Activated naive CD4-positive, alpha-beta T cell treated with anti-CD3 and anti-CD28 coated beads for 36 hours (primary cell): ENCODE measurements at regions of chr2 and their contacts with region 1.

Region 1: GRCh38 chr2:226649871-226650660 is 149.6 kb downstream of the IRS1 start:
- DNase-seq: peak; percentile 74
- H3K4me3 Mint-ChIP-seq: no peak overlapping the region
- H3K27ac Mint-ChIP-seq: peak overlapping the region; percentile 50
- H3K4me1 Mint-ChIP-seq: peaks cover 25% of the 10 kb centered on the region
- H3K27me3 Mint-ChIP-seq: peaks cover 3% of the 10 kb centered on the region

Region 2: DNA sequence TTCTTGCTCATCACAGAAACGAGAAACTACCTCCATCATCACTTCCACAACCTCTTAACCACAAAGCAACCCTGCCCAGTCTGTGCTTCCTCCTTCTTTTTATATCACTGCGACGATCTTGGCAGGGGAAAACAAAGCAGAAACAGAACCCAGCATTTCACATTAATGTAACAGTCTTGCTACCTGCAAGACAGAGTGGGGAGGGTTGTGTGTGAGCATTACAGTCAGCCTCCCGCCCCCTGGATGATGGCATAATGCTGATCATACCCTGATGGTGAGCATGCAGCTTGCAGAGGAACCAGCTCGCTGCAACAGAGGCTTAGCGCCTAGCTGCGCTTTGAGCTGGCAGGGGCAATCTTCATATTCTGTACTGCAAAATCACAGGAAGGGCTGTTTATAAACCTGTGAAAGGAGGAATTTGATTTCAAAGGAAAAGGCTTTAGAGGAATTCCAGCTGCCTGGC is 226.5 kb before region 1 on chr2:
- CTCF ChIA-PET with region 1: no interaction called
- intact Hi-C with region 1: loop called (anchors 1 kb)
- DNase-seq: peak; percentile 57
- H3K4me3 Mint-ChIP-seq: peak overlapping the region; percentile 17
- H3K27ac Mint-ChIP-seq: no peak overlapping the region
- H3K4me1 Mint-ChIP-seq: peaks cover 10% of the 10 kb centered on the region
- H3K27me3 Mint-ChIP-seq: peaks cover 10% of the 10 kb centered on the region

Region 3: DNA sequence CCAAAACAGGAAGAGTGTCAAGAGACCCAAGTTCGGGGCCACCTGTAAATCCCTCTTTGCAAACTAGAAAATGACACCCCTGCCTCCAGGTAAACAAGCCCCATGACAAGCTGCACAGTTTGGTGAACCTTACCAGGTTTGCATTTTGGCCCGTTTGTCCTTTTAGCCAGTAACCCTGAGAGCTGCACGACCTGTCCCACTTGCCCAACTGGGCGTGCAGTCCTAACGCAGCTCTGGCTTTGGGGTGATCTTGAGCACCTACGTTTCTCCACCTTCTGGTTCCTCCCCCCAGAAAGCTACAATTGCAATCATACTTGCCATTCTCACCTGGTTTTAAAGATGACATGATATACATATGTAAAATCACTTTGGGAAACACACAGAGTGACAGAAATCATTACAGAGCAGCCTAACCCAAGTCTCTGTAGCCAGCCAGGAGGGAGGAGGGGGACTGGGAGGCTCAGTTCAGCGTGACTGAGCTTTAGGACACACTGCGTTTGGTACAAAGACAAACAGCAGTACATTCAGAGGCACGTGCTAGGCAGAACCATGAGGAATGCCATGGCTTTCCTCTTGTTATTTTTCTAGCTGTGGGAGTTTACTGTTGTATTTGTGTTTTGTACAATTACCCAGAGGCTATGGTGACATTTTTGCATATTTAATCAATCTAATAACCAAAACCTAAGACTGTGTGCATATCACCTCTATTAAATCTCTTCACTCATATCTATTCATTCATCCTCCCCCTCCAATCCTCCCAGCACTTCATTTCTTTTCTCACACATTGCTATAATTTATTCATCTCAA is 154.4 kb before region 1 on chr2:
- CTCF ChIA-PET with region 1: no interaction called
- intact Hi-C with region 1: no loop called
- DNase-seq: no peak
- H3K4me3 Mint-ChIP-seq: no peak overlapping the region
- H3K27ac Mint-ChIP-seq: no peak overlapping the region
- H3K4me1 Mint-ChIP-seq: no peaks in the 10 kb centered on the region
- H3K27me3 Mint-ChIP-seq: peaks cover 6% of the 10 kb centered on the region

Region 4: DNA sequence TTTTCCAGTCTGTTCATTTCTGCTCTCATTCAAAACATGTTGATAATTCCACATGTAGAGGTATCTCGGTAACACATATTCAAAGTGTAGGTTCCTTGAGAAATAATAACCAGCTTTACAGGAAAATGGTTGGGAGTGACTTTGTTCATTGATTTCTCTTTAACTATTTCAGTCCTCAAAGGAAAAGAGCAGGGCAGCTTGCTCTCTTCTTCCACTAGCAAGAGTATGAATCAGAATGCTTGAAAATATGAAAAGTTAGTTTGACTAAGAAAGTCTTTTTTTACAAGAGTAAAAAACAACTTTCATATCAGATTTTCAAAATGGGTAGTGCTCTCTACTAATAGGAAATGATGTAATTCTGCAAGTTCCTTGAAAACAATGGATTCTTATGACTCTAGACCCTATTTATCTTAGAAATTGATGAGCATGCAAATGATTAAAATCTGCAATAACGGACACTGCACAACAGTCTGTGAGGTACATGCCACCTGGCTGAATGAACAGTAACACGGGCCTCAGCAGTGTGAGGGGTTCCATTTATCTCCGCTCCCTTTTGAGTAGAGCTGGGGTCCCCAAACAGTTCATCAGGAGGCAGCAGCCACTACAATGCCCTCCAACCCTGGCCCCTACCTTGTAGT is 84.0 kb after region 1 on chr2:
- CTCF ChIA-PET with region 1: no interaction called
- intact Hi-C with region 1: loop called (anchors 1 kb)
- DNase-seq: no peak
- H3K4me3 Mint-ChIP-seq: no peak overlapping the region
- H3K27ac Mint-ChIP-seq: peak overlapping the region; percentile 73
- H3K4me1 Mint-ChIP-seq: peaks cover 11% of the 10 kb centered on the region
- H3K27me3 Mint-ChIP-seq: no peaks in the 10 kb centered on the region

Region 5: GRCh38 chr2:226791487-226792081 is 141.5 kb after region 1 on chr2:
- CTCF ChIA-PET with region 1: no interaction called
- intact Hi-C with region 1: loop called (anchors 1 kb)
- DNase-seq: peak; percentile 90
- H3K4me3 Mint-ChIP-seq: peak overlapping the region; percentile 83
- H3K27ac Mint-ChIP-seq: peak overlapping the region; percentile 95
- H3K4me1 Mint-ChIP-seq: peaks cover 37% of the 10 kb centered on the region
- H3K27me3 Mint-ChIP-seq: no peaks in the 10 kb centered on the region

Region 6: GRCh38 chr2:226984750-226985582 is 334.9 kb after region 1 on chr2:
- CTCF ChIA-PET with region 1: no interaction called
- intact Hi-C with region 1: loop called (anchors 5 kb)
- DNase-seq: peak; percentile 45
- H3K4me3 Mint-ChIP-seq: no peak overlapping the region
- H3K27ac Mint-ChIP-seq: no peak overlapping the region
- H3K4me1 Mint-ChIP-seq: peaks cover 19% of the 10 kb centered on the region
- H3K27me3 Mint-ChIP-seq: no peaks in the 10 kb centered on the region